Activated CD8-positive, alpha-beta T cell treated with anti-CD3 and anti-CD28 coated beads for 36 hours (primary cell): ENCODE measurements at regions of chr20 and their contacts with region 1.

Region 1: GRCh38 chr20:59518881-59519688 is 85.3 kb upstream of the PHACTR3 start:
- DNase-seq: peak; percentile 28
- ATAC-seq: peak; percentile 77
- H3K4me3 Mint-ChIP-seq: no peak overlapping the region
- H3K27ac Mint-ChIP-seq: no peak overlapping the region
- H3K4me1 Mint-ChIP-seq: no peaks in the 10 kb centered on the region
- H3K27me3 Mint-ChIP-seq: peaks cover 51% of the 10 kb centered on the region
- CTCF ChIP-seq: peak; percentile 89

Region 2: DNA sequence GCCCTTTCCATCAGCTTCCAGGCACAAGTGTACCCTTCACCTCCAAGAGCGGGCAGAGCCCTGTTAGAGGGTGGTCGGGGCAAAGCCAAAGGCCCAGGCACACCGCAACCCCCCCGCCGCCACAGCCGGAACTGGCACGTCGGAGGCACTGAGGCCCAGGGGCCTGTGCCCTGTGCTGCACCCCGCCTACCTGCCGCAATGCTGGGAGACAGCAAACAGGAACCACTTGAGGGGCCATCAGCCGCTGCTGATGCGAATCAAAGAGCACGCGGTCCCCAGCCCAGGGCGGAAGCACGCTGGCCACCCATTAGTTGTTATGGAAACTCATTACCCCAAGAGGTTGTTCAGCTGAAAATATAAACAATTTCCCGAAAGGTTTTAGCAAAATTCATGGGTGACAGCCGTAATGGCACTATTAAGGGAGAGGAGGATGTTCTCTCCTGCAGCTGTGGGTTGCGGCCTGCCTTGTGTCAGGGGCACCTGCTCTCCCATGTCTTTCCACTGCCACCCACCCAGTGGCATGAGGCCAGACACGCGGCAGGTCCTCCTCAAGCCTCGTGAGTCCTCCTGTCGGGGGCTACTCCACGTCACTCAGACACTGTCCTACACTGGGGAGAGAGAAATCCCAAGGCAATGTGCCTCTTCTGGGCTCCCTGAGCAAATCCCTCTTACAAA is 153.3 kb before region 1 on chr20:
- CTCF ChIA-PET with region 1: no interaction called
- POLR2A ChIA-PET with region 1: no interaction called
- intact Hi-C with region 1: no loop called
- DNase-seq: no peak
- ATAC-seq: no peak
- H3K4me3 Mint-ChIP-seq: no peak overlapping the region
- H3K27ac Mint-ChIP-seq: no peak overlapping the region
- H3K4me1 Mint-ChIP-seq: no peaks in the 10 kb centered on the region
- H3K27me3 Mint-ChIP-seq: no peaks in the 10 kb centered on the region
- CTCF ChIP-seq: no peak

Region 3: GRCh38 chr20:59455402-59456341 is 63.4 kb before region 1 on chr20:
- CTCF ChIA-PET with region 1: no interaction called
- POLR2A ChIA-PET with region 1: no interaction called
- intact Hi-C with region 1: no loop called
- DNase-seq: no peak
- ATAC-seq: no peak
- H3K4me3 Mint-ChIP-seq: no peak overlapping the region
- H3K27ac Mint-ChIP-seq: no peak overlapping the region
- H3K4me1 Mint-ChIP-seq: no peaks in the 10 kb centered on the region
- H3K27me3 Mint-ChIP-seq: no peaks in the 10 kb centered on the region
- CTCF ChIP-seq: peak; percentile 39

Region 4: GRCh38 chr20:59508729-59509128 is 10.4 kb before region 1 on chr20:
- CTCF ChIA-PET with region 1: interaction called, 12 read pairs
- POLR2A ChIA-PET with region 1: no interaction called
- intact Hi-C with region 1: no loop called
- DNase-seq: no peak
- ATAC-seq: no peak
- H3K4me3 Mint-ChIP-seq: no peak overlapping the region
- H3K27ac Mint-ChIP-seq: no peak overlapping the region
- H3K4me1 Mint-ChIP-seq: no peaks in the 10 kb centered on the region
- H3K27me3 Mint-ChIP-seq: no peaks in the 10 kb centered on the region
- CTCF ChIP-seq: no peak

Region 5: GRCh38 chr20:59880198-59880597 is 361.1 kb after region 1 on chr20:
- CTCF ChIA-PET with region 1: no interaction called
- POLR2A ChIA-PET with region 1: no interaction called
- intact Hi-C with region 1: no loop called
- DNase-seq: no peak
- ATAC-seq: no peak
- H3K4me3 Mint-ChIP-seq: no peak overlapping the region
- H3K27ac Mint-ChIP-seq: no peak overlapping the region
- H3K4me1 Mint-ChIP-seq: no peaks in the 10 kb centered on the region
- H3K27me3 Mint-ChIP-seq: peaks cover 2% of the 10 kb centered on the region
- CTCF ChIP-seq: no peak